ENCODE measurements at regions of chr6 and their contacts with region 1.

Region 1: GRCh38 chr6:159174263-159174969 is 5.2 kb downstream of the FNDC1 start:
- DNase-seq: peak; percentile 90
- H3K4me3 Mint-ChIP-seq: no peak overlapping the region
- H3K27ac Mint-ChIP-seq: no peak overlapping the region
- H3K4me1 Mint-ChIP-seq: peaks cover 5% of the 10 kb centered on the region
- H3K27me3 Mint-ChIP-seq: peaks cover 64% of the 10 kb centered on the region

Region 2: GRCh38 chr6:158937376-158937768 is 237.0 kb before region 1 on chr6:
- intact Hi-C with region 1: no loop called
- DNase-seq: no peak
- H3K4me3 Mint-ChIP-seq: no peak overlapping the region
- H3K27ac Mint-ChIP-seq: no peak overlapping the region
- H3K4me1 Mint-ChIP-seq: peaks cover 8% of the 10 kb centered on the region
- H3K27me3 Mint-ChIP-seq: peaks cover 19% of the 10 kb centered on the region

Region 3: GRCh38 chr6:159252955-159253508 is 78.6 kb after region 1 on chr6:
- intact Hi-C with region 1: loop called (anchors 5 kb)
- DNase-seq: peak; percentile 65
- H3K4me3 Mint-ChIP-seq: no peak overlapping the region
- H3K27ac Mint-ChIP-seq: no peak overlapping the region
- H3K4me1 Mint-ChIP-seq: no peaks in the 10 kb centered on the region
- H3K27me3 Mint-ChIP-seq: no peaks in the 10 kb centered on the region

Region 4: DNA sequence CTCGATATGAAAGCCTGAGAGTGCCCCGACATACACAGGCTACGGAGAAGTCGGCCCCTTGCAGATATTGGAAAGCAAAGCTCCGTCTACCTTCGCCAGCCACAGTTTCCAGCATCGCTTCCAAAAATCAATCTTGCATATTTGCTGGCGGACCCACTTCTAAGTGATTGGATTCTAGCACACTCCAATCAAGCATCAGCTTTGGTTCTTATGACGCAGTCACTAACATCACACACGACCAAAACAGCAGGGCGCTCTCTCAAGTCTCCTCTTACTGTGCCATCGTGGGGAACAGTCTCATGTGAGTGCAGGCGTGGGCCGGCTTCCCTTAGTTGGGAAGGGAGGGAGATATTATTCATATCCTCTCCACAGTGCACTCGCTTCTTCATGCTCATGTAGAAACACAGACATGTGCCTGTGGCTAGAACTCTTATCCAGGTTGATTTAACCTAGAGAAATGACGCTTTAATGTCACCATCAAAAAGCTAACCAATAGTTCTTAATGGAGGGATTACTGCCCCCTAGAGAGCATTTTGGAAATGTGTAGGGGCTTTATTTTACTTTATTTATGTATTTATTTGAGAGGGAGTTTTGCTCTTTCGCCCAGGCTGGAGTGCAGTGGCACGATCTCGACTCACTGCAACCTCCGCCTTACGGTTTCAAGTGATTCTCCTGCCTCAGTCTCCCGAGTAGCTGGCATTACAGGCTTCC is 288.9 kb after region 1 on chr6:
- intact Hi-C with region 1: loop called (anchors 5 kb)
- DNase-seq: no peak
- H3K4me3 Mint-ChIP-seq: no peak overlapping the region
- H3K27ac Mint-ChIP-seq: no peak overlapping the region
- H3K4me1 Mint-ChIP-seq: no peaks in the 10 kb centered on the region
- H3K27me3 Mint-ChIP-seq: peaks cover 12% of the 10 kb centered on the region

Region 5: DNA sequence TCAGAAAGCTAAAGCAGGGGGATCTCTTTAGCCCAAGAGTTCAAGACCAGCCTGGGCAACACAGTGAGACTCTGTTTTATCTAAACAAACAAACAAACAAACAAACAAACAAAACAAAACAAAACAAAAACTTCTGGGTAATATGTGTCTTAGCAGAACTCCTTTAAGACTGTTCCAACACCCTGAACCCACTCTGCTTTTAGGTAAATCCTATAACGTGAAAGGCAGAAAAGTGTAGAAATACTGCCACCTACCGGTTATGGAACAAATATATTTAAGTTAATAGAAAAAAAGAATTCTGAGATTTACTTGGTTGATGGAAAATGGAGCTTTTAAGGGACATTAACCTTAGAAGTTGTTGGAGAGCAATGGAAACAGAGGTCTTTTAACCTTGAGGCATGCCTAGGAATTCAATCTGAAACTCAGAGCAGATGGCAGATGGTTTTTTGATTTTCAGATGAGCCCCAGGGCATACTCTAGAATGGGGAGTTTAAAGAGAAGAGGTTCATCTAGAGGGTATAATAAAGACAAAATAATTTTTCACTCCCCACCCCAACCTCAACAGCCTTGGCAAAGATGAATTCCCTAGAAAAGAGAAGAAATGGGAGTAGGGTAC is 480.2 kb after region 1 on chr6:
- intact Hi-C with region 1: loop called (anchors 2 kb)
- DNase-seq: peak; percentile 68
- H3K4me3 Mint-ChIP-seq: no peak overlapping the region
- H3K27ac Mint-ChIP-seq: no peak overlapping the region
- H3K4me1 Mint-ChIP-seq: no peaks in the 10 kb centered on the region
- H3K27me3 Mint-ChIP-seq: peaks cover 11% of the 10 kb centered on the region